H1 (cell line): ENCODE measurements at regions of chr12 and their contacts with region 1.

Region 1: GRCh38 chr12:15856097-15856982 is 25.8 kb upstream of the STRAP start:
- DNase-seq: peak in 1 of 2 experiments; percentile 58
- H3K4me3 ChIP-seq: no peak overlapping the region
- H3K27ac ChIP-seq: no peak overlapping the region
- H3K4me1 ChIP-seq: no peaks in the 10 kb centered on the region
- H3K27me3 ChIP-seq: no peaks in the 10 kb centered on the region
- CTCF ChIP-seq: peak in 2 of 3 experiments; percentile 60 to 71; a peak in 3 of 4 replicates
- EP300 ChIP-seq: no peak
- POLR2A ChIP-seq: no peak
- RAD21 ChIP-seq: peak; percentile 89 to 92

Region 2: DNA sequence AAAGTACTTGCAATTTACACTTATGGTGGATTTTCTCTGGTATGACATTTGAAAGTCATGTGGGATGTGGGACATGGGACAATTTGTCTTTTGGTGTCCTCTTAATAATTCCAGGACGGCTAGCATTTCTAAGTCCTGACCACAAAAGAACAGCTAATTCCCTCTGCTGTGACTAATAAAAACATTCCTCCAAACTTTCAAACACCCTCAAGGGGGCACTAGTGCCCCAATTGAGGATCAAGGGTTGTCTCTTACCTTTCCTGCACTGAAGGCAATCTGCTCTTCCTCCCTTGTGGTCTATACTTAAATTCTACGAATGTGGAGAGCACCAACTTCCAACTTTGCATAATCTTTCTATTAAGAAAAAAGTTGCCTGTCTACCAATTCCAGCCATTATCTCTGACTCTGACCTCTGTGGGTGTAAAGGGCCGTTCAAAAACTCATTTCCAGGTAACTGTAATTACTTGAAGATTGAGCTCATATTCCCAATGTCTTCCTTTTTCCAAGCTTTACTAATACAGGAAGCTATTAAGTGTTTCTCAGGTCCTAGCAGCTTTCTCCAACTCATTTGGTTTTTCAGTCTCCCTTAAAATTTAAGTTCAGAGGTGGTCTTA is 323.9 kb before region 1 on chr12:
- CTCF ChIA-PET with region 1: interaction called, 45 read pairs
- POLR2A ChIA-PET with region 1: no interaction called
- DNase-seq: peak; percentile 36 to 56
- H3K4me3 ChIP-seq: no peak overlapping the region
- H3K27ac ChIP-seq: no peak overlapping the region
- H3K4me1 ChIP-seq: no peaks in the 10 kb centered on the region
- H3K27me3 ChIP-seq: no peaks in the 10 kb centered on the region
- CTCF ChIP-seq: peak in 2 of 3 experiments; percentile 70 to 76; a peak in 3 of 4 replicates
- EP300 ChIP-seq: no peak
- POLR2A ChIP-seq: no peak
- RAD21 ChIP-seq: peak; percentile 85 to 87

Region 3: GRCh38 chr12:15584366-15585041 is 271.8 kb before region 1 on chr12:
- CTCF ChIA-PET with region 1: interaction called, 76 read pairs
- POLR2A ChIA-PET with region 1: no interaction called
- DNase-seq: no peak
- H3K4me3 ChIP-seq: no peak overlapping the region
- H3K27ac ChIP-seq: no peak overlapping the region
- H3K4me1 ChIP-seq: no peaks in the 10 kb centered on the region
- H3K27me3 ChIP-seq: no peaks in the 10 kb centered on the region
- CTCF ChIP-seq: peak in 2 of 3 experiments; percentile 25 to 67; a peak in 2 of 4 replicates
- EP300 ChIP-seq: no peak
- POLR2A ChIP-seq: no peak
- RAD21 ChIP-seq: peak; percentile 57 to 59

Region 4: DNA sequence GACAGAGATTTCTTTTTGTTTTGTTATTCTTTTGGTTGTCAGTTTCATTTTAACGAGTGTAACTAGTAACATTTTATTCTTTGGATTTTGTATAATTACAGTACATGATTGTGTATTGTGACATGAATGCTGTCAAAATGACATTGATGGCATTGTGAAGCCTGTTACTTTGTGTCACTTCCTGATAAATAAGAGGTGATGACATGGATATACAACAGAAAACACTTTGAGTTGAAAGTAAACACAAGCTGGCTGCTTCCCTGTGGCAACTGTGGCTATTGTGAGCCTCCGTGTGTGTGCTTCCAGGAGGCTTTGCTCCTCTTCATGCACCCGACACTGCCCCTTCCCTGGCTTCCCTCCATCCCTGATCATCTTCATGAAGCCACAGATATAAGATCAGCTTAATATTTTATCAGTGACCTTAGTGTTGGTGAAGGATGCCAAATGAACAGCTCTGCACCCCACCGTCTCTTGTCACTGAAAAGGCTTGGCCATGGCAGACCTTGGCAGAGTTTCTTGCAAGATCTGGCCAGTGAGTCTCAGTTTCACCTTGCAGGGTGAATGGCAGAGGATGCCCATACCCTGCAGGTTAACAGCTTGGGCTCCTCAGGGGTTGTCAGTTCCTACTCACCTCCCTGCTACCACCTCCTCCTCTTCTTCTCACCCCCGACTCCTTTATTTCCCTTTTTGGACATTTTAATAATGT is 259.1 kb before region 1 on chr12:
- CTCF ChIA-PET with region 1: interaction called, 72 read pairs
- POLR2A ChIA-PET with region 1: no interaction called
- DNase-seq: no peak
- H3K4me3 ChIP-seq: no peak overlapping the region
- H3K27ac ChIP-seq: no peak overlapping the region
- H3K4me1 ChIP-seq: no peaks in the 10 kb centered on the region
- H3K27me3 ChIP-seq: no peaks in the 10 kb centered on the region
- CTCF ChIP-seq: no peak
- EP300 ChIP-seq: no peak
- POLR2A ChIP-seq: no peak
- RAD21 ChIP-seq: no peak

Region 5: DNA sequence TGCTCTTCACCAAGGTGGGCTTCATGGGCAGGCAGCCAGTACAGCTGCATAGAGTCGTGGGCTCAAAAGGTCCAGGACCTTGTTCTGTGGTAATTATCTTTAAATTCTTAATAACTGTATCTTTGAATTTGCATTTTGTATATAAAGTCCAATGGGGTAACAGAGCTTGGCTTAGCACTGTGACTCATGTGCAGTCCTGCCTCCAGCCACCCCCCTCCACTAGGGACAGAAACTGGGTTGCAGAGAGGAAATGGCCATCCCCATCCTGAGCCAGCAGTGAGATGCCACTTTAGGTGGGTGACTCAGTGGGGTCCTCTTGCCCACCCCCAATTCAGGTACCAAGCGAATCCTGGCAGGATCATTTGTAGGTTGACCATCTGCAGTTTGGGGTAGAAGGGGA is 115.3 kb before region 1 on chr12:
- CTCF ChIA-PET with region 1: no interaction called
- POLR2A ChIA-PET with region 1: no interaction called
- DNase-seq: no peak
- H3K4me3 ChIP-seq: no peak overlapping the region
- H3K27ac ChIP-seq: no peak overlapping the region
- H3K4me1 ChIP-seq: no peaks in the 10 kb centered on the region
- H3K27me3 ChIP-seq: no peaks in the 10 kb centered on the region
- CTCF ChIP-seq: no peak
- EP300 ChIP-seq: no peak
- POLR2A ChIP-seq: no peak
- RAD21 ChIP-seq: no peak

Region 6: GRCh38 chr12:15873556-15873955 is 17.2 kb after region 1 on chr12:
- CTCF ChIA-PET with region 1: interaction called, 13 read pairs
- POLR2A ChIA-PET with region 1: no interaction called
- DNase-seq: no peak
- H3K4me3 ChIP-seq: no peak overlapping the region
- H3K27ac ChIP-seq: no peak overlapping the region
- H3K4me1 ChIP-seq: peaks cover 0 to 4% (median 2%) of the 10 kb centered on the region in 4 experiments; a peak in 1 of 7 replicates
- H3K27me3 ChIP-seq: no peaks in the 10 kb centered on the region
- CTCF ChIP-seq: no peak
- EP300 ChIP-seq: no peak
- POLR2A ChIP-seq: no peak
- RAD21 ChIP-seq: no peak